ENCODE measurements at regions of chr12 and their contacts with region 1.

Region 1: GRCh38 chr12:20681334-20681733 is 13.8 kb upstream of the SLCO1C1 start:
- DNase-seq: no peak
- H3K4me3 Mint-ChIP-seq: no peak overlapping the region
- H3K27ac Mint-ChIP-seq: no peak overlapping the region
- H3K4me1 Mint-ChIP-seq: no peaks in the 10 kb centered on the region
- H3K27me3 Mint-ChIP-seq: no peaks in the 10 kb centered on the region
- CTCF ChIP-seq: no peak

Region 2: DNA sequence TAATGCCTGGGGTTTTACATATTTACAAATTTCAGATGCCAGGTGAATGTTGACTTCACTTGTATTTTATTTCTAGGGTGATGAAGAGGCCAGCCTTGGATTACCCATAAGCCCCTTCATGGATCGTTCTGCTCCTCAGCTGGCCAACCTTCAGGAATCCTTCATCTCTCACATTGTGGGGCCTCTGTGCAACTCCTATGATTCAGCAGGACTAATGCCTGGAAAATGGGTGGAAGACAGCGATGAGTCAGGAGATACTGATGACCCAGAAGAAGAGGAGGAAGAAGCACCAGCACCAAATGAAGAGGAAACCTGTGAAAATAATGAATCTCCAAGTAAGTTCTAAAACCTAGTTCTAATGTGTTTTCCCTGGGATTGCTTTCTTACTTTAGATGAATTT is 27.5 kb before region 1 on chr12:
- CTCF ChIA-PET with region 1: no interaction called
- intact Hi-C with region 1: no loop called
- DNase-seq: no peak
- H3K4me3 Mint-ChIP-seq: no peak overlapping the region
- H3K27ac Mint-ChIP-seq: no peak overlapping the region
- H3K4me1 Mint-ChIP-seq: no peaks in the 10 kb centered on the region
- H3K27me3 Mint-ChIP-seq: no peaks in the 10 kb centered on the region
- CTCF ChIP-seq: no peak

Region 3: DNA sequence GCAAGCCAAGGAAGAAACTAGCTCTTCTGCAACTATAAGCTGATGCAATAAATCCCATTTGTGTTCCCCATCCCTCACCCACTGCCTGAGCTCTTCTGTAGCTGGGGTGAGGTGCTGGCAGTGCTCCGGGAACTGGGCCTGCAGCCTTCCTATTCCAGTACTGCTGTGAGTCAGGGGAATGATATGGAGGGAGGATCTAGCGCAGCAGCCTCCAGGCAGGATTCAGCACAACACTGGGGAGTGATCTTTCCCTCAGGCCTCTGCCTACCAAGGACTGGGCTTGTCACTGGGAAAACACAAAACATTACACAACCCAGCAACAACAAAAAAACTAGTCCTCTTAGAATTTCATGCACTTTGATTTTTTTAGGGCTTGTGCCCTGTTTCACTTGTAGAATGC is 1594.5 kb after region 1 on chr12:
- CTCF ChIA-PET with region 1: interaction called, 14 read pairs
- intact Hi-C with region 1: no loop called
- DNase-seq: peak; percentile 7
- H3K4me3 Mint-ChIP-seq: no peak overlapping the region
- H3K27ac Mint-ChIP-seq: no peak overlapping the region
- H3K4me1 Mint-ChIP-seq: no peaks in the 10 kb centered on the region
- H3K27me3 Mint-ChIP-seq: peaks cover 31% of the 10 kb centered on the region
- CTCF ChIP-seq: no peak